ENCODE measurements at regions of chr9 and their contacts with region 1.

Region 1: DNA sequence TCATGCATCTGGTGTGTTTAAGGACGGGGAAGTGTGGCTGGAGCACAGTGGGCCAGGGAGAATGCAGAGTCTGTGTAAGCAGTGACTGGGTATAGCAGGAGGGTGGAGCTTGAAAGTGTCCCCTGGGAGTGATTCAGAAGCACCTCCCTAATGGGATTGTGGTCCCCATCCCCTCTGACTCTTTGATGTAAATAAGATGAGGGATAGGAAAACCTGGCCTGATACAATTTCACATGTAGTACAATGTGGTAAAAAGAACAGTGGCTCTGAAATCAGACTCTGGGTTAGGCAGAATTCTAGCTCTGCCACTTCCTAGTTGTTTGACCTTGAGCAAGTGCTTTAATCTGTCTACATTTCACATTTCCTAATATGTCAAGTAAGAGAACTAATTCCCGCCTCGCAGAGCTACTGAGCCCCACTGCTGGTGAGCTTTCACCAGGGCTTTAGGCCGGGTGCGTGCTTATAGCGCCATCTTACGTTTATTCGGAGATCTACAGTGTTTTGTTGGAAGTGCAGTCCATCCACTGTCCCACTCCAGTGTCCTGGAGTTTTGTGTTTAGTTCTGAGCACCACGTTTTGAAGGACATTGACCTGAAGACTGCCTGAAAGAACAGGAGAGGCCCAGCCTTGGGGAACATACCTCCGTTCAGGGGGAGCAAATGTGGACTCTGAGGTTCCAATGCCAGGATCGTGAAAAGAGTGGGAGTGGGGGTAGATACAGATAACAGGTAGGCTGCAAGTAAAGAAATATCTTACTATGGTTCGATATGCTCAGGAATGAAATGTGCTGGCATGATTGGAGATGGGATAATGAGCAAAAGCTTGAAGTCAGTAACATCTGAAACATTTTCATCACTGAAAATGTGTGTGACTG is 51.2 kb upstream of the TESK1 start:
- DNase-seq: peak; percentile 65
- ATAC-seq: peak; percentile 89

Region 2: DNA sequence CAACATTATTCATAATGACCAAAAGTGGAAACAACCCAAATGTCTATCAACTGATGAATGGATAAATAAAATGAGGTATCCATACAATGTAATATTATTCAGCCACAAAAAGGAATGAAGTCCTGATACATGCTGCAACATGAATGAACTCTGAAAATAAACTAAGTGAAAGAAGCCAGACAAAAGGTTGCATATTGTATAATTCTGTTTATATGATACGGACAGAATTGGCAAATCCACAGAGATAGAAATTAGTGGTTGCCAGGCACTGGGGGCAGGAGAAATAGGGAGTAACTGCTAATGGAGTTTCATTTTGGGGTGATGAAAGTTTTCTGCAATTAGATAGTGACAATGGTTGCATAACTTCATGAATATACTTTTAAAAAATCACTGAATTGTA is 1271.8 kb before region 1 on chr9:
- intact Hi-C with region 1: no loop called
- DNase-seq: no peak
- ATAC-seq: no peak

Region 3: GRCh38 chr9:35476596-35476995 is 77.3 kb before region 1 on chr9:
- intact Hi-C with region 1: loop called (anchors 5 kb)
- DNase-seq: no peak
- ATAC-seq: no peak

Region 4: GRCh38 chr9:35489313-35490154 is 64.4 kb before region 1 on chr9 and contains the start of gene RUSC2:
- intact Hi-C with region 1: loop called (anchors 5 kb)
- DNase-seq: peak; percentile 92
- ATAC-seq: peak; percentile 87
- total RNA-seq, gene RUSC2: 30.3 TPM